ENCODE measurements at regions of chr7 and their contacts with region 1.

Region 1: DNA sequence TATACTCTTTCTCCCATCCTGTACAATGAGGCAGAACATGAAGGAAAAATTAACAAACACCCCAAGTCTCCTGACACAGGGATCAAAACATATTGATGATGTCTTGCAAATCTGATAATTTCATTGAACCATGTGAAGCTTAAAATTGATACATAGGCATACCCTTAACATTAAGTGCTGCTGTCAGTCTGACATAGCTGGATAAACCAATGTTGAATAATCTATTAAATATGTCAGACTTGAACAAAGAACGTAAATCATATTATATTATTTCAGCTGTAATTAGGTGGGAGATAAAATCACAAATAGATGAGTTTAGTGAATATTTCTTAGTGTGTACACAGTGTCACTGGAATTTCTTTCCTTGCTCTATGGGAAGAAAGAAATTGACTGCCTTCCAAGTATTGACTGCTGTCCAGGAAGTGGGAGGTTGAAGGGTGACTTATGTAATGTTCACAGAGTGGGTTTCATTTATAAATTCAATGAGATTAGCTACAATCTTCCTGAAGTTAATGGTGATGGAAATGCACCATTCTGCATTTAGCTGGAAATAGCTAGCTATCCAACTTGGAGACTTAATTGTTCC is 170.8 kb downstream of the AUTS2 start:
- DNase-seq: no peak
- ATAC-seq: no peak
- H3K4me3 ChIP-seq: no peak overlapping the region
- H3K27ac ChIP-seq: no peak overlapping the region
- H3K4me1 ChIP-seq: peaks cover 16% of the 10 kb centered on the region
- H3K27me3 ChIP-seq: no peaks in the 10 kb centered on the region
- CTCF ChIP-seq: no peak
- EP300 ChIP-seq: no peak
- POLR2A ChIP-seq: no peak
- RAD21 ChIP-seq: no peak

Region 2: GRCh38 chr7:69732222-69732621 is 36.9 kb before region 1 on chr7:
- CTCF ChIA-PET with region 1: no interaction called
- POLR2A ChIA-PET with region 1: no interaction called
- RAD21 ChIA-PET with region 1: no interaction called
- SMC1A ChIA-PET with region 1: no interaction called
- in situ Hi-C with region 1: no loop called
- intact Hi-C with region 1: no loop called
- DNase-seq: no peak
- ATAC-seq: no peak; the same call in none of the 3 replicates
- H3K4me3 ChIP-seq: no peak overlapping the region
- H3K27ac ChIP-seq: no peak overlapping the region
- H3K4me1 ChIP-seq: 0 out of 2 replicates have a peak, but pooled peaks cover under 1% of the 10 kb centered on the region
- H3K27me3 ChIP-seq: no peaks in the 10 kb centered on the region; a peak in 1 of 4 replicates
- CTCF ChIP-seq: no peak
- EP300 ChIP-seq: no peak
- POLR2A ChIP-seq: no peak
- RAD21 ChIP-seq: no peak

Region 3: GRCh38 chr7:69796416-69796815 is 27.3 kb after region 1 on chr7:
- CTCF ChIA-PET with region 1: interaction called, 6 read pairs
- POLR2A ChIA-PET with region 1: interaction called, 4 read pairs
- RAD21 ChIA-PET with region 1: interaction called, 6 read pairs
- SMC1A ChIA-PET with region 1: interaction called, 11 read pairs
- in situ Hi-C with region 1: no loop called
- intact Hi-C with region 1: no loop called
- DNase-seq: no peak
- ATAC-seq: no peak
- H3K4me3 ChIP-seq: no peak overlapping the region
- H3K27ac ChIP-seq: no peak overlapping the region
- H3K4me1 ChIP-seq: peaks cover 7% of the 10 kb centered on the region; the same call in 1 of the 2 replicates
- H3K27me3 ChIP-seq: no peaks in the 10 kb centered on the region
- CTCF ChIP-seq: no peak
- EP300 ChIP-seq: no peak
- POLR2A ChIP-seq: no peak
- RAD21 ChIP-seq: no peak

Region 4: DNA sequence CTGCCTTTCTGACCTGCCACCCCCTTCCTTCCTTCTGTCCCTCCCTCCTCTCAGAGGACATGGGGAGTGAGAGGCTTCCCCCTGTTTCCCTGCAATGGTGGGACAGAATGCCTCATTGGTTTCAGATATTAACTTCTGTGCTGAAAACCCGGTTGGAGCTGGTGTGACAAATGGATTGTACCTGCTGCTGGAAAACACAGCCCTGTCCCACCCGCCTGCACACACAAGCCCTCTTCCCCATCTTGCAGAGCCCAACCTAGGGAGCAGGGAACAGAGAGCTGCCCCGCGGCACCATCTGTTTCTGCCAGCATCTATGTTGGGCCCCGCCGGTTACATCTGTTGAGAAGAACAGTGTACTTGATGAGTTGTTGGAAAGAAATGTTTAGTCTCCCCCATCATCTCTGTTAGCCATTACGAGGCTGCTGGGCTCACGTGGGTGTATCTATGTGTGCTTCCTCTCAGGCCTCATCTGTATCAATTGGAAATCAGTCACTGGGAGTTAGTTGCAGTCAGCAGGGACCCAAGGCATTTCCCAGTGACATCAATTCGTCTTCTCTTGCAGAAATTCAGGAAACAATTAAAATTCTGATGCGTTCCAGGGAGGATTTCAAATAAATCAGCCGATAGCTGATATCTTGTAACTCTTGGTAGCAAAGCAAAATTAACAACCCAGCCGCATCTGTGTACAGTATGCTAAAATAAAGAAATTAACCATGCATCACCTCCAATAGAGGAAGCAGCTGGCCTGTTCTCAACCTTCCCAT is 637.3 kb after region 1 on chr7:
- CTCF ChIA-PET with region 1: no interaction called
- POLR2A ChIA-PET with region 1: no interaction called
- RAD21 ChIA-PET with region 1: no interaction called
- SMC1A ChIA-PET with region 1: no interaction called
- in situ Hi-C with region 1: no loop called
- intact Hi-C with region 1: no loop called
- DNase-seq: no peak
- ATAC-seq: no peak
- H3K4me3 ChIP-seq: no peak overlapping the region
- H3K27ac ChIP-seq: no peak overlapping the region
- H3K4me1 ChIP-seq: no peaks in the 10 kb centered on the region; the same call in 1 of the 2 replicates
- H3K27me3 ChIP-seq: no peaks in the 10 kb centered on the region
- CTCF ChIP-seq: no peak
- EP300 ChIP-seq: no peak
- POLR2A ChIP-seq: no peak
- RAD21 ChIP-seq: no peak